WTC11 (cell line): ENCODE measurements at regions of chr3 and their contacts with region 1.

Region 1: DNA sequence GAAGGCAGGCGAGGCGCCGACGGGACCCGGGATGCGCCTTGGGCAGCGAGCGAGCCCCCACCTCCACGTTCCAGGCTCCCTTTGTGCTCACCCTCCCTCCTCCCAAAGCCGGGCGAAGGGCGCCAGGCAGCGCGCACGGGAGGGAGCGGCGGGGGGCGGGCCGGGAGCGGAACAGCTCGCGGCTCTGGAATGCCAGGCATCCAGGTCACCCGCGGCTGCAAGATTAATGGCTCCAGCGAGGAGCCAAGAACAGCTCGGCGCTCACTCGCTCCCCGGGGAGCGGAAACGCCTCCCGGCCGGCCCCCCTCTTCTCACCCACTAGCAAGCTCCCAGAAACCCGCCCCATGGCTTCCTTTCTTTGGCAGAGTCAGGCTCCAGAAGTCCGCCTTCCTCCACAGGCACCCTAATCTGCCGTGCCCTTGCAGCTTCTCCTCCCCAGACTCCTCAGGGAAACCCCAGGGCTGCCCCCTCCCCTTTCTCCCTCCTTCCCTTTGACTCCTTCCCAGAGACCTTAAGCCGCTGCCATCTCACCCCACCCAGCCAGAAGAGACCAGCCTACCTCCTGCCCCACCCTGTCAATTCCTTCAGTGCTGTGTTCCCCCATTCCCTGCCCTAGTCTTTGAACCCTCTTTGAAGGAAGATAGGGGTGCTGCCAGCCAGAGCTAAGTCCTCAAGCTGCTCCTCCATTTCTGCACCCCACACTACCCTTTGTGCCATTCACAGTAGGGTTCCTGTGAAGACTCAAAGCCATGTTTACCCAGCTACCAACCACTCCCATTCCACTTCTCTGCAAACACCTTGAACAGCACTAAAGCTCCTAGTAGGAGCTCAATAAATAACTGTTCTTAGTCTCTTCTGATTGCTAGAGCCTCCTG is 9.9 kb downstream of the AMOTL2 start:
- DNase-seq: peak; percentile 96
- ATAC-seq: peak; percentile 73
- H3K4me3 Mint-ChIP-seq: peak overlapping the region; percentile 37
- H3K27ac Mint-ChIP-seq: peak overlapping the region; percentile 96
- H3K4me1 Mint-ChIP-seq: peaks cover 48% of the 10 kb centered on the region
- H3K27me3 Mint-ChIP-seq: no peaks in the 10 kb centered on the region
- CTCF ChIP-seq: no peak

Region 2: GRCh38 chr3:134331008-134331830 is 33.1 kb before region 1 on chr3:
- CTCF ChIA-PET with region 1: interaction called, 12 read pairs
- POLR2A ChIA-PET with region 1: interaction called, 11 read pairs
- DNase-seq: peak; percentile 35
- ATAC-seq: peak; percentile 23
- H3K4me3 Mint-ChIP-seq: no peak overlapping the region
- H3K27ac Mint-ChIP-seq: peak overlapping the region; percentile 52; the same call in 1 of the 2 replicates
- H3K4me1 Mint-ChIP-seq: peaks cover 73% of the 10 kb centered on the region
- H3K27me3 Mint-ChIP-seq: no peaks in the 10 kb centered on the region
- CTCF ChIP-seq: no peak